ENCODE measurements at regions of chr19 and their contacts with region 1.

Region 1: GRCh38 chr19:49451430-49452181 is at the start of gene PIH1D1:
- DNase-seq: peak; percentile 97 to 100 (median 98)
- H3K4me3 ChIP-seq: peak within 1 kb of the TSS; percentile 71 to 98 (median 79)
- H3K4me3 Mint-ChIP-seq: peak within 1 kb of the TSS; percentile 95 to 100
- H3K27ac ChIP-seq: peak within 1 kb of the TSS; percentile 92 to 98
- H3K27ac Mint-ChIP-seq: peak within 1 kb of the TSS; percentile 99 to 100 (median 100)
- H3K4me1 ChIP-seq: peaks cover 28 to 39% of the 10 kb centered on the region in 2 donors
- H3K4me1 Mint-ChIP-seq: peaks cover 39% of the 10 kb centered on the region
- H3K27me3 ChIP-seq: no peaks in the 10 kb centered on the region
- H3K27me3 Mint-ChIP-seq: peaks cover 0 to 3% (median 0%) of the 10 kb centered on the region in 3 donors
- CTCF ChIP-seq: no peak
- polyA plus RNA-seq, gene PIH1D1: 62.3 to 102 (median 83.9) TPM

Region 2: DNA sequence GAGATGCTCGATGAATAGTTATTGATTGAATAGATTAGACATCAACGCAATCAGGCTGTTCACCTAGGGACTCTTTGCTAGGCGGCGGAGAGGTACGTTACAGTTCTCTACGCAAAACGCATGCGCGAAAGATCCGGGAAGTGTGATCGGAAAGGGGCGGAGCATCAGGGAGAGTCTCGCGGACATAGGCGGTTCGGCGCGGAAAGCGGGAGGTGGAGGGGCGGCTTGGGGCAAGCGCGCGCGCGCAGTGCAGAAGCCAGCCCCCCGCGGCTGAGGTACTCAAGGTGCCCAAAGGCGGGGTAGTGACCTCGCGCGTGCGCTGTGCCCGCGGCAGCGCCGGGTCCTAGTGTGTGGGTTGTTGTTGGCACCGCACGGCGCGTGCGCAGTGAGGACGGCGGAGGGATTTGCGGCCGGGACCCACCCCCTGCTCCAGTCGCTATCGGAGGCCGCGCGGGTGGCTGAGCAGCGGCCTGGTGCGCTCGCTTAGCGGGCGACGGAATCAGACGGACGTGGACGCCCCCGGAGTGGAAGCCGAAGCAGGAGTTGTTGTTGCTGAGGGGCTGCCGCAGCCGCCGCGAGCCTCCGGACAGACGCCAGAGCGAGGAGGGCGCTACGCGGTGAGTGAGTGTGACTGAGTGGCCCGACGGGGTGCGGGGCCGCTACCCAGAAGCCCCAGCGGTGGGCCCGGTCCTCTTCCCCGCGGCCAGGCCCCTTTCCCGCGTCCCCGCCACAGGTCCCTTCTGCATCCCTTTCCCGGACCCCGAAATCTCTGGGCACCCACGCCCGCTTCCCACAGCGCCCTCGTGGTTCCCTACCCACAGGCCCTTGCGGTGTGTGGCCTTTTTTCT is 366.4 kb before region 1 on chr19 and contains the start of gene SNRNP70:
- intact Hi-C with region 1: loop called in 1 of 2 experiments (anchors 10 kb)
- DNase-seq: peak; percentile 98 to 99 (median 99)
- H3K4me3 ChIP-seq: peak within 1 kb of the TSS; percentile 62 to 93 (median 71)
- H3K4me3 Mint-ChIP-seq: peak within 1 kb of the TSS; percentile 91 to 94
- H3K27ac ChIP-seq: peak within 1 kb of the TSS; percentile 61 to 84
- H3K27ac Mint-ChIP-seq: peak within 1 kb of the TSS; percentile 86 to 95 (median 89)
- H3K4me1 ChIP-seq: peaks cover 18 to 22% of the 10 kb centered on the region in 2 donors
- H3K4me1 Mint-ChIP-seq: peaks cover 21% of the 10 kb centered on the region
- H3K27me3 ChIP-seq: no peaks in the 10 kb centered on the region
- H3K27me3 Mint-ChIP-seq: peaks cover 2 to 4% (median 2%) of the 10 kb centered on the region in 3 donors
- CTCF ChIP-seq: no peak
- polyA plus RNA-seq, gene SNRNP70: 27.4 to 360 (median 40.4) TPM

Region 3: DNA sequence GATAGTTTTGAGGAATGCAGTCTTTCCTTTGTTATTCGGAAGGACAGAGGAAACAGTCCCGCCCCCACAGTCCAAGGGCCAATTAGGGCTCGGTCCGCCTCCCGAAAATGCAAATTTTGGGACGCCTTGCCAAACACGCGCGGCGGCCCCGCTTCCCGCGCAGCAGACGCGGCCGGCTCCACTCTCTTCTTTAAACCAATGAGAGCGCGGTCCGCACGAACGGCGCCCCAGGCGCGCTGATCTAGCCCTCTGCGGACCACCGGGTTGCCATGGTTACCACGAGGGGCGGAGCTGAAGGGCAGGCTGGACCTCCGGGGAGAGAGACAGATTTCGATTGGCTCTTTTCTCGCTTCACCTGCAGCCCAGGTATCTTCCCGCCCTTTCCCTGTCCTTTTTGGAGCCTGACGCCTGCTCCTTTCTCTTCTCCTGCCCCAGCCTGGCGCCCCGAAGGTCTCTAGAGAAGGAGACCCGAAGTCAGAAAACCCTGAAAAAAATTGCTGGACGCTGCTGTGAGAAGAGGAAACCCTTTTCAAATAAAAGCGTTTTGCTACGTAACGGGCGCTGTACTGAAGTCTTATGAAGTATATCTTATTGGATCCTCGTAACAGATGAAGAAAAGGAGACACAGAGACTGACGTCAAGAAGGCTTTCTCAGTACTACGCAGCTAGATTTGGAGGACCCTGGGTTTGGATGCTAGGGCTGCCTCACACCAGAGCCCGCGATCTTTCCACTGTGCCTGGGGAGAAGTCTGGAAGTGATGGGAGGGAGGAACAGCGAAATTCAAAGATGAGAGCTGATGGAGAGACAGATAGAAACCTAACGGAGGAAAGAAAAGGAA is 30.3 kb before region 1 on chr19:
- intact Hi-C with region 1: no loop called
- DNase-seq: peak; percentile 33 to 51 (median 49)
- H3K4me3 ChIP-seq: no peak overlapping the region
- H3K4me3 Mint-ChIP-seq: peak overlapping the region in 1 of 2 donors; percentile 90
- H3K27ac ChIP-seq: no peak overlapping the region
- H3K27ac Mint-ChIP-seq: peak overlapping the region in 1 of 7 donors; percentile 28
- H3K4me1 ChIP-seq: peaks cover 13 to 21% of the 10 kb centered on the region in 2 donors
- H3K4me1 Mint-ChIP-seq: peaks cover 37% of the 10 kb centered on the region
- H3K27me3 ChIP-seq: peaks cover 59 to 70% of the 10 kb centered on the region in 2 donors
- H3K27me3 Mint-ChIP-seq: peaks cover 71 to 83% (median 79%) of the 10 kb centered on the region in 3 donors
- CTCF ChIP-seq: no peak

Region 4: DNA sequence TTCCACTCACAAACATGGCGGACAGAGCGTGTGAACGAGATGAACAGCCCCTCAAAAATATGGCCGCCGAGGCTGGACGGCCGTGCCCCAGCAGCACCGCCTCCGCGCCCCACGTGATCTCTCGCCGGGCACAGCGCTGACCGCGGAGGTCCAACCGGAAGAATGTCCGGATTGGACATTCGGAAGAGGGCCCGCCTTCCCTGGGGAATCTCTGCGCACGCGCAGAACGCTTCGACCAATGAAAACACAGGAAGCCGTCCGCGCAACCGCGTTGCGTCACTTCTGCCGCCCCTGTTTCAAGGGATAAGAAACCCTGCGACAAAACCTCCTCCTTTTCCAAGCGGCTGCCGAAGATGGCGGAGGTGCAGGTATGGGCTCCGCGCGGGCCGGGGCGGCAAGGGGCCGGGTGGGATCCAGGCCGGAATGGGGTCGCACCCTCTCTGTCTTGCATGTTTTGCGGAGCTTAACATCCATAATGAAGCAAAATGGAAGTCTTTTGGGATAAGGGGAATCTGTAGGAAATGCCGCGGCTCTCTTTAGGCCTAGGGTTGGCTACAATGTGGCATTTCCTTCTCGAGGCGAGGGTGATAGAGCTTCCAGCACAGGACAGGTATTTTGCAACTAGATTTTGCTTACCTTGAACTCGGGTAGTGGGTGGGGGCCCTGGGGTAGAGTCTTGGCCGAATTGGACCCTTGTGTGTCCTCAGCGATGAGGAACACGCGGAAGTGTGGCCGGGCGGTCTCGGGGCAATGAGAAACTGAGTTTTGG is 35.9 kb after region 1 on chr19 and contains the start of gene RPL13A:
- intact Hi-C with region 1: loop called in 1 of 2 experiments (anchors 5 kb)
- DNase-seq: peak; percentile 100
- H3K4me3 ChIP-seq: peak within 1 kb of the TSS; percentile 79 to 95 (median 82)
- H3K4me3 Mint-ChIP-seq: peak within 1 kb of the TSS; percentile 98
- H3K27ac ChIP-seq: peak within 1 kb of the TSS; percentile 50 to 89
- H3K27ac Mint-ChIP-seq: peak within 1 kb of the TSS; percentile 89 to 97 (median 96)
- H3K4me1 ChIP-seq: peaks cover 17 to 19% of the 10 kb centered on the region in 2 donors
- H3K4me1 Mint-ChIP-seq: peaks cover 23% of the 10 kb centered on the region
- H3K27me3 ChIP-seq: no peaks in the 10 kb centered on the region
- H3K27me3 Mint-ChIP-seq: peaks cover 0 to 3% (median 1%) of the 10 kb centered on the region in 3 donors
- CTCF ChIP-seq: no peak
- polyA plus RNA-seq, gene RPL13A: 655 to 1,621 (median 663) TPM

Region 5: GRCh38 chr19:49497047-49497788 is 45.6 kb after region 1 on chr19:
- intact Hi-C with region 1: loop called in 1 of 2 experiments (anchors 5 kb)
- DNase-seq: peak; percentile 89 to 93 (median 91)
- H3K4me3 ChIP-seq: peak overlapping the region; percentile 84 to 98 (median 86)
- H3K4me3 Mint-ChIP-seq: peak overlapping the region; percentile 91 to 94
- H3K27ac ChIP-seq: peak overlapping the region; percentile 92 to 95
- H3K27ac Mint-ChIP-seq: peak overlapping the region; percentile 95 to 99 (median 97)
- H3K4me1 ChIP-seq: peaks cover 47 to 52% of the 10 kb centered on the region in 2 donors
- H3K4me1 Mint-ChIP-seq: peaks cover 40% of the 10 kb centered on the region
- H3K27me3 ChIP-seq: no peaks in the 10 kb centered on the region
- H3K27me3 Mint-ChIP-seq: peaks cover 9 to 18% (median 12%) of the 10 kb centered on the region in 3 donors
- CTCF ChIP-seq: no peak